Naive thymus-derived CD4-positive, alpha-beta T cell (primary cell): ENCODE measurements at regions of chr4 and their contacts with region 1.

Region 1: GRCh38 chr4:15729910-15730533 is 27.2 kb downstream of the BST1 start:
- DNase-seq: peak in 7 of 9 donors; percentile 26 to 62 (median 54)
- ATAC-seq: peak; percentile 78
- H3K4me3 ChIP-seq: no peak overlapping the region
- H3K4me3 Mint-ChIP-seq: no peak overlapping the region
- H3K27ac ChIP-seq: no peak overlapping the region
- H3K27ac Mint-ChIP-seq: no peak overlapping the region
- H3K4me1 ChIP-seq: no peaks in the 10 kb centered on the region
- H3K4me1 Mint-ChIP-seq: peaks cover 7 to 30% (median 18%) of the 10 kb centered on the region in 7 donors
- H3K27me3 ChIP-seq: no peaks in the 10 kb centered on the region
- H3K27me3 Mint-ChIP-seq: no peaks in the 10 kb centered on the region

Region 2: DNA sequence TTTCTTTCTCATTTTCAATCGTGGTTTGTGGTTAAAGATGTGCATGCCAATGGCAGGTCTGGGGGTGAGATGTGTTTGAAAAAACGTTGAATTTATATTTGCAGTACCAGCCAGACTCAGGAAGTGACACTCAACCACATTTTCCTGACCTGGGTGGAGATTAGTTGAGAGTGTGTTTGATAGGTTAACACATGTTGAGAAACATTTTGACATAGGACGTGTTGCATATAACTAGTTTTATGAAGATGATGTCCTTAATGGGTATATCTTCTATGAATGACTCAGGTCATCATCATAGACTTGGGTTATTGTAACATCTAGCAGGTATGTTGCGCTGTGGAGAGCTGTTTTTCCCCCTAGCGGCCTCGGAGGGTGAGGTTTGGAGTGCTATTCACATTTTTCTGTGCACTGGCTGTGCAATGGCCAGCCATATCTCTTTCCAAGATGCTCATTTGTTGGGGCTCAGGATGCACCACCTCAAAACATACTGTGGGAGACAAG is 26.4 kb after region 1 on chr4:
- CTCF ChIA-PET with region 1: interaction called, 9 read pairs
- POLR2A ChIA-PET with region 1: no interaction called
- intact Hi-C with region 1: loop called (anchors 1 kb)
- DNase-seq: peak; percentile 33 to 83 (median 78)
- ATAC-seq: peak; percentile 89
- H3K4me3 ChIP-seq: peak overlapping the region; percentile 41
- H3K4me3 Mint-ChIP-seq: peak overlapping the region; percentile 64 to 92 (median 76)
- H3K27ac ChIP-seq: peak overlapping the region; percentile 39
- H3K27ac Mint-ChIP-seq: peak overlapping the region; percentile 81 to 98 (median 93)
- H3K4me1 ChIP-seq: peaks cover 35 to 36% of the 10 kb centered on the region in 2 donors
- H3K4me1 Mint-ChIP-seq: peaks cover 43 to 69% (median 62%) of the 10 kb centered on the region in 7 donors
- H3K27me3 ChIP-seq: no peaks in the 10 kb centered on the region
- H3K27me3 Mint-ChIP-seq: no peaks in the 10 kb centered on the region

Region 3: DNA sequence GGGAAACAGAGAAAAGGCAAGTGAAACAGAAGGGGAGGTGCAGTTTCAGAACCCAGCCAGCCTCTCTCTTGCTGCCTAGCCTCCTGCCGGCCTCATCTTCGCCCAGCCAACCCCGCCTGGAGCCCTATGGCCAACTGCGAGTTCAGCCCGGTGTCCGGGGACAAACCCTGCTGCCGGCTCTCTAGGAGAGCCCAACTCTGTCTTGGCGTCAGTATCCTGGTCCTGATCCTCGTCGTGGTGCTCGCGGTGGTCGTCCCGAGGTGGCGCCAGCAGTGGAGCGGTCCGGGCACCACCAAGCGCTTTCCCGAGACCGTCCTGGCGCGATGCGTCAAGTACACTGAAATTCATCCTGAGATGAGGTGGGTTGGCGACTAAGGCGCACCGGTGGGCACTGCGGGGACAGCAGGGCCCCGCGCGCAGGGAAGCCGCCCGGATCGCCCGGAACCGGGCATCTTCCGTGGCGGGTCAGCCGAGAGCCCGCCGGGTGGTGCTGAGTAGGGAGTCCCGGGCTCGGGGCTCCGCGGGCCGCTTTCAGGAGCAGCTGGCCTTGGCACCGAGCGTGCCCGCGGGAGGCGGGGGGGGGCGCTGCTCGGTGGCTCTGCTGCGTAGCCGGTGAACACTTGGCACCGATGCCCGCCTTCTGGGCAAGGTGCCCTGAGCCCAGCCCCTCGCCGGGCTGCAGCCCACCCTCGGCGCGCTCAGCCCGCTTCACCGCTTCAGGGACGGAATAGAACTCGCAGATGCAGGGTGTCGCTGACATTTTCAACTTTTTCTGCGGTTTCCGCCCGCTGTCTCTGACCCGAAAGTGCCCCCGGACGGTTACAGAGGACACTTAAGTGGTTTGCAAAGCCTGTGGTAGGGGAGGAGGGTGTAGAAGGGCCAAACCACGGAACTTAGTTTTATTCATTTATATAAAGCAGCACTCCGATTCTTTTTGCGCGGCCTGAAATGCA is 48.5 kb after region 1 on chr4 and contains the start of gene CD38:
- CTCF ChIA-PET with region 1: no interaction called
- POLR2A ChIA-PET with region 1: no interaction called
- intact Hi-C with region 1: loop called (anchors 1 kb)
- DNase-seq: peak; percentile 16 to 67 (median 37)
- ATAC-seq: peak; percentile 66
- H3K4me3 ChIP-seq: peak within 1 kb of the TSS; percentile 71
- H3K4me3 Mint-ChIP-seq: peak within 1 kb of the TSS; percentile 86 to 97 (median 94)
- H3K27ac ChIP-seq: peak within 1 kb of the TSS; percentile 65
- H3K27ac Mint-ChIP-seq: peak within 1 kb of the TSS; percentile 81 to 93 (median 87)
- H3K4me1 ChIP-seq: peaks cover 12 to 32% of the 10 kb centered on the region in 2 donors
- H3K4me1 Mint-ChIP-seq: peaks cover 37 to 82% (median 77%) of the 10 kb centered on the region in 7 donors
- H3K27me3 ChIP-seq: no peaks in the 10 kb centered on the region
- H3K27me3 Mint-ChIP-seq: no peaks in the 10 kb centered on the region
- total RNA-seq, gene CD38: 5.6 to 189 (median 14.3) TPM

Region 4: DNA sequence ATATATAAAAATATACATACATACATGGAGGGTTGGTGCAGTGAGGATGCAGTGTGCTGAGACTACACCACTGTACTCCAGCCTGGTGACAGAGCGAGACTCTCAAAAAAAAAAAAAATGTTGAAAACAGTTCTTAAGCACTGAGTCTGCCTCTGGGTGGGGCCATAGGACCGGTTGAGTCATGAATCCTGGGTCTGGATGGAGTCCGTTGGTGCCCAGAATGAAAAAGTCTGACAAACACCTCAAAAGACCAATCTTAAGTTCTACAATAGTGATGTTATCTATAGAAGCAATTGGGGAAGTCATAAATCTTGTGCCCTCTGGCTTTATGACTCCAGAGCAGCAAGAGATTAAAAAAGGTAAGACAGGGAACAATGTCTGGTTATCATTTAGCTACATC is 138.1 kb after region 1 on chr4:
- CTCF ChIA-PET with region 1: interaction called, 4 read pairs
- POLR2A ChIA-PET with region 1: no interaction called
- intact Hi-C with region 1: loop called in 1 of 2 experiments (anchors 10 kb)
- DNase-seq: peak in 1 of 9 donors; percentile 8
- ATAC-seq: no peak
- H3K4me3 ChIP-seq: no peak overlapping the region
- H3K4me3 Mint-ChIP-seq: no peak overlapping the region
- H3K27ac ChIP-seq: no peak overlapping the region
- H3K27ac Mint-ChIP-seq: no peak overlapping the region
- H3K4me1 ChIP-seq: no peaks in the 10 kb centered on the region
- H3K4me1 Mint-ChIP-seq: no peaks in the 10 kb centered on the region
- H3K27me3 ChIP-seq: no peaks in the 10 kb centered on the region
- H3K27me3 Mint-ChIP-seq: peaks cover 0 to 17% (median 5%) of the 10 kb centered on the region in 5 donors

Region 5: DNA sequence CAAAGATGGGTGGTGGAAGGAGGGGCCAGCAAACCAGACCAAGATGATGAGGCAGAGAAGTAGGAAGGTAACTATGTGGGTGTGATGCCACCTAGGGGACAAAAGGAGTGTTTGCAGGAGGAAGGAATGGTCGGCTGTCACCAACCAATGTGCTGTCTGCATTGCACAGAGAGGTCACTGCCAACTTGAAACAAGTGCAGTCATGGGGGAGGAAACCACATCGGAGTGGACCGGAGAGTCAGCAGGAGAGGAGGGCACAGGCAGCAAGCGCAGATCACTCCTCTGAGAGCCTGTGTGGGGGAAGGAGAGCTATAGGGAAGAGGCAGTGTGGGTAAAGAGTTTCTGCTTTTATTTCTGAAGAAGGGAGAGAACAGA is 271.4 kb after region 1 on chr4:
- CTCF ChIA-PET with region 1: interaction called, 3 read pairs
- POLR2A ChIA-PET with region 1: no interaction called
- intact Hi-C with region 1: loop called (anchors 1 kb)
- DNase-seq: peak in 8 of 9 donors; percentile 13 to 59 (median 47)
- ATAC-seq: peak; percentile 95
- H3K4me3 ChIP-seq: no peak overlapping the region
- H3K4me3 Mint-ChIP-seq: no peak overlapping the region
- H3K27ac ChIP-seq: no peak overlapping the region
- H3K27ac Mint-ChIP-seq: no peak overlapping the region
- H3K4me1 ChIP-seq: no peaks in the 10 kb centered on the region
- H3K4me1 Mint-ChIP-seq: no peaks in the 10 kb centered on the region
- H3K27me3 ChIP-seq: no peaks in the 10 kb centered on the region
- H3K27me3 Mint-ChIP-seq: peaks cover 0 to 8% (median 3%) of the 10 kb centered on the region in 5 donors